CD4-positive, alpha-beta memory T cell (primary cell): ENCODE measurements at regions of chr19 and their contacts with region 1.

Region 1: DNA sequence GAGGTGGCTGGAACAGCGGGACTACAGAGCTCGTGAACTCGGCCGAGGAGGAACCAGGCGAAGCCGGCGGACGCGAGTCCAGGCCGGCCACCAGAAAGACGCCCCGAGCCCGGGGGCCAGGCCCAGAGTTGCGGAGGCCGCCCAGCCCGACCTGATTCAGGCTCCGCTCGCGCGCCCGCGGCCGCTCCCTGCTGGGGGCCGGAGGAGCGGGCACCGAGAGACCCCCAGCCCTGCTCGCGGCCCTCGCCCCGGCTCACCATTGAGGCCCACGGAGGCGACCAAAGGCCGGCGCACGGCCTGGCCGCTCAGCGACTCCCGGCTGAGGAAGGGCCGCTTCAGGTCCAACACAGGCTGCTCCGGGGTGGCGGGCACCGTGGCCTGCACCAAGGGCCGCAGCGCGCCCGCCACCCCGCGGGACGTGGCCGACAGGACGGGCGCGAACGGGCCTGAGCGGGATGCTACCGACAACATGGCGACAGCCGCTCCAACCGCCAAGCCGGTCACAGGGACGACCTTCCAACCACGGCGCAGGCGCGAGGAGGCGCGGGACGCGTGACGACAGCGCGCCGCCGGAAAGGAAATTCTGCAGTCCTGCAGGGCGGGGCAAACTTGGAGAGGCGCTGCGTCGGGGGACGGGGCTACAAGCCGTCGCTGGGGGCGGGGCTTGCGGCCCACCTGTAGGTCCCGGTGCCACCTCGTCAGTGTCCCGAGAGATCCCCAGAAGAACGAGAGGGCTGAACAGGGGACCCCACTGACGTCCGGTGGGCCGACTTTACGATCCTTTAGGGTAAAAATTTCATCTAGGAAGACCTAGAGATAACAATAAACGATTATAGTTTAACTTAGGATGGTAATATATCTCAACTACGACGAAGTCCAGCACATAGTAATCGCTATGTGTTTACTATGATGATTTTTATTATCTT is at the start of gene UQCRFS1:
- DNase-seq: peak; percentile 93 to 96 (median 95)
- H3K4me3 ChIP-seq: peak within 1 kb of the TSS; percentile 75 to 82
- H3K4me3 Mint-ChIP-seq: peak within 1 kb of the TSS; percentile 93 to 99 (median 98)
- H3K27ac ChIP-seq: peak within 1 kb of the TSS; percentile 88
- H3K27ac Mint-ChIP-seq: peak within 1 kb of the TSS; percentile 94 to 99 (median 99)
- H3K4me1 ChIP-seq: peaks cover 36% of the 10 kb centered on the region
- H3K4me1 Mint-ChIP-seq: peaks cover 34 to 50% (median 42%) of the 10 kb centered on the region in 4 donors
- H3K27me3 ChIP-seq: no peaks in the 10 kb centered on the region
- H3K27me3 Mint-ChIP-seq: peaks cover 1 to 10% of the 10 kb centered on the region in 2 donors
- total RNA-seq, gene UQCRFS1: 16.2 to 17.6 TPM

Region 2: GRCh38 chr19:27793644-27794493 is 1419.0 kb before region 1 on chr19:
- CTCF ChIA-PET with region 1: no interaction called
- POLR2A ChIA-PET with region 1: interaction called, 3 read pairs
- intact Hi-C with region 1: loop called (anchors 5 kb)
- DNase-seq: peak; percentile 90 to 95 (median 91)
- H3K4me3 ChIP-seq: peak overlapping the region; percentile 75 to 85
- H3K4me3 Mint-ChIP-seq: peak overlapping the region; percentile 91 to 99 (median 98)
- H3K27ac ChIP-seq: peak overlapping the region; percentile 66
- H3K27ac Mint-ChIP-seq: peak overlapping the region; percentile 85 to 98 (median 94)
- H3K4me1 ChIP-seq: peaks cover 23% of the 10 kb centered on the region
- H3K4me1 Mint-ChIP-seq: peaks cover 14 to 48% (median 30%) of the 10 kb centered on the region in 4 donors
- H3K27me3 ChIP-seq: no peaks in the 10 kb centered on the region
- H3K27me3 Mint-ChIP-seq: no peaks in the 10 kb centered on the region

Region 3: DNA sequence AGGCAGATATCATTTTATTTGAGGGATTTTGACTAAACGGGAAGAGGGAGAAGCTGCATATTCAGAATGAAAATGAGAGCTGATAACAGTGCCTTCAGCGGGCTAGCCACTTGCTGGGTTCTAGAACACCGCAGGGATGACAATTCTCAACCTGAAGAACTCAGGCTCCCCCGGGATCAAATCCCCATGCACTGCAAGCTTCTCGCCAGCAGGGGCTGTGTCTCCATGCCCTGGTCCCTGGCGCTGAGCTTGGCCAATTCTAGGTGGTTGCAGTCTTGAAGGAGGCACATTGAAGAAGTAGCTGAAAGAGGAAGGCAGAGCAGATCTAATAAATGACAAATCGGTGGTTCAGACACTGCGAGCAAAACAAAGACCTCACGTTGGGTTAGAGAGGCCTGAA is 128.6 kb before region 1 on chr19:
- CTCF ChIA-PET with region 1: no interaction called
- POLR2A ChIA-PET with region 1: no interaction called
- intact Hi-C with region 1: no loop called
- DNase-seq: no peak
- H3K4me3 ChIP-seq: no peak overlapping the region
- H3K4me3 Mint-ChIP-seq: no peak overlapping the region
- H3K27ac ChIP-seq: no peak overlapping the region
- H3K27ac Mint-ChIP-seq: no peak overlapping the region
- H3K4me1 ChIP-seq: no peaks in the 10 kb centered on the region
- H3K4me1 Mint-ChIP-seq: peaks cover 0 to 5% (median 0%) of the 10 kb centered on the region in 4 donors
- H3K27me3 ChIP-seq: no peaks in the 10 kb centered on the region
- H3K27me3 Mint-ChIP-seq: peaks cover 0 to 3% of the 10 kb centered on the region in 2 donors

Region 4: DNA sequence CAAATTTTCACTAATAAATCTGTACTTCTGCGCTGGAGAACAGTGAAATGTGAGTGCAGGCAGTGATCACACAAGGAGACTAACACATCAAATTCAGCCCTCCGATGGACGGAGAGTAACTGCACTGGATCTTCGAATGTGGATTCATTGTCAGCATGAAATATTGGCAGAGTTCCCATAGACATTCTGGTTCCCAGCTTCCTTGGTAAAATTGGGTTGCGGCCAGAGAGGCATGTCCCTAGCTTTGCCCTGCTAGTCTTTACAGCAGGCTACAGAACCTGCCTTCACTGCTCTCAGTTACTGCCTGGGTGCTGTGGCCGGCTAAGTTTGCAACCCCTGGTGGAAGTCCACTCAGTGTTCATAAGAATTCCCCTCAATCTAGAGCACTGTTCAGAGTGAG is 32.3 kb after region 1 on chr19:
- CTCF ChIA-PET with region 1: no interaction called
- POLR2A ChIA-PET with region 1: no interaction called
- intact Hi-C with region 1: no loop called
- DNase-seq: no peak
- H3K4me3 ChIP-seq: no peak overlapping the region
- H3K4me3 Mint-ChIP-seq: no peak overlapping the region
- H3K27ac ChIP-seq: no peak overlapping the region
- H3K27ac Mint-ChIP-seq: no peak overlapping the region
- H3K4me1 ChIP-seq: no peaks in the 10 kb centered on the region
- H3K4me1 Mint-ChIP-seq: no peaks in the 10 kb centered on the region
- H3K27me3 ChIP-seq: no peaks in the 10 kb centered on the region
- H3K27me3 Mint-ChIP-seq: peaks cover 16 to 33% of the 10 kb centered on the region in 2 donors

Region 5: DNA sequence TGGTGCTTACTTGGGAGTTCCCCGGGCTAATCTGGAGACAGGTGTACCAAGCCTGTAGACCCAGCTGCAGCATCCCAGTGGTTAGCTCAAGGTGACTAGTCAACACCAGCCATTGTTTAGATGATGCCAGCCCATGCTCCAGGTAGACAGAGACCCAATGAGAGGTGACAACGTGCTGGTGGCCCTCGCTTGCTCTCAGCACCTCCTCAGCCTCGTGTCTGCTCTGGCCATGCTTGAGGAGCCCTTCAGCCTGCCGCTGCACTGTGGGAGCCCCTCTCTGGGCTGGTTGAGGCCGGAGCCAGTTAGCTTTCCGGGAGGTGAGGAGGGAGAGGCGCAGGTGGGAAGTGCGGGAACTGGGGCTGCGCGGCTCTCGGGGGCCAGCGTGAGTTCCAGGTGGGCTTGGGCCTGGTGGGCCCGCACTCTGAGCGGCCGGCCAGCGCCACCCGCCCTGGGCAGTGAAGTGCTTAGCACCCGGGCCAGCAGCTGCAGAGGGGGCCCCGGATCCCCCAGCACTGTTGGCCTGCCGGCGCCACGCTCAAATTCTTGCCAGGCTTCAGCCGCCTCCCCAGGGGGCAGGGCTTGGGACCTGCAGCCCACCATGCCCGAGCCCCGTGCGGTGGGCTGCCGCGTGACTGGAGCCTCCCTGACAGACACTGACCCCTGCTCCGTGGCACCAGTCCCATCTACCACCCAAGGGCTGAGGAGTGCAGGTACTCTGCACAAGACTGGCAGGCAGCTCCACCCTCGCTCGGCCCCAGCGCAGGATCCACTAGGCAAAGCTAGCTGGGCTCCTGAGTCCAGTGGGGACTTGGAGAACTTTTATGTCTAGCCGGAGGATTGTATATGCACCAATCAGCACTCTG is 227.0 kb after region 1 on chr19:
- CTCF ChIA-PET with region 1: no interaction called
- POLR2A ChIA-PET with region 1: no interaction called
- intact Hi-C with region 1: no loop called
- DNase-seq: no peak
- H3K4me3 ChIP-seq: no peak overlapping the region
- H3K4me3 Mint-ChIP-seq: no peak overlapping the region
- H3K27ac ChIP-seq: no peak overlapping the region
- H3K27ac Mint-ChIP-seq: no peak overlapping the region
- H3K4me1 ChIP-seq: no peaks in the 10 kb centered on the region
- H3K4me1 Mint-ChIP-seq: no peaks in the 10 kb centered on the region
- H3K27me3 ChIP-seq: no peaks in the 10 kb centered on the region
- H3K27me3 Mint-ChIP-seq: peaks cover 5% of the 10 kb centered on the region in 2 donors